ENCODE measurements at regions of chr6 and their contacts with region 1.

Region 1: DNA sequence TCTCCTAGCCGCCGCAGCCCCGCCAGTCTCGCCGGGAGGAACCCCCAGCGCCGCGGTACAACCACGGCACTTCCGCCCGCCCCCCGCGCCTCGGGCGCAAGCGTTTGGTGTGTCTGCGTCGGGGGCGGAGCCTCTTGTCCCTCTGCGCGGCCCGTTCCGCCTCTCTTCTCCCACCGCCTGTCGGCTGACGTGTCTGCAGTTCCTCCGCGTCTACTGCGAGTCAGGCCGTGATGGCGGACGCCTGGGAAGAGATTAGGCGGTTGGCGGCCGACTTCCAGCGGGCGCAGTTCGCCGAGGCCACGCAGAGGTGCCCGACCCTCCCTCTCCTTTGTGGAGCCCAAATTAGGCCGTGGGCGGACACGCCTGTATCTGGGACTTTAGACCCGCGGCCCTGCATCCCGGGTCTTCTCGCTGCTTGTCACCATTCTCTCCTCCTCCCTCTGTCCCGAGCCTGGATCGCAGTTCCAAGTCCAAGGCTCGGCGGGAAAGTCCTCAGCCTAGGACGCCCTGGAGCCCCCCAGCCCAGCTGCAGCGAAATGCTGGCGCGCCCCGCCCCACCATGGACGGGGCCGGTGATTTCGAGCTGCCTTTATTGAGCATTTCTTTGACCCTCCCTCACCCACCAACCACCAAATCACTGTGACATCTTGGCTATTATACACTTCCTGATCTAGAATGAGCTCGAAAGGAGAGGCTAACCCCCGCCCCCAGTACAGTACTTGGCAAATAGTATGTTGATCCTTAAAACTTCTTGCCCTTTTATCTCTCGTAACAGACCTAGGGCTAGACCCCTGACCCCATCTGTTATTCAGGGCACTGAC is at the start of gene UFL1:
- DNase-seq: peak; percentile 92
- H3K4me3 Mint-ChIP-seq: peak within 1 kb of the TSS; percentile 100
- H3K27ac Mint-ChIP-seq: peak within 1 kb of the TSS; percentile 99
- H3K4me1 Mint-ChIP-seq: peaks cover 22% of the 10 kb centered on the region
- H3K27me3 Mint-ChIP-seq: no peaks in the 10 kb centered on the region
- total RNA-seq, gene UFL1: 22.5 to 23.5 TPM

Region 2: GRCh38 chr6:96345501-96345900 is 176.4 kb before region 1 on chr6:
- CTCF ChIA-PET with region 1: no interaction called
- POLR2A ChIA-PET with region 1: no interaction called
- DNase-seq: no peak
- H3K4me3 Mint-ChIP-seq: no peak overlapping the region
- H3K27ac Mint-ChIP-seq: no peak overlapping the region
- H3K4me1 Mint-ChIP-seq: no peaks in the 10 kb centered on the region
- H3K27me3 Mint-ChIP-seq: no peaks in the 10 kb centered on the region

Region 3: GRCh38 chr6:96468681-96469224 is 53.1 kb before region 1 on chr6:
- CTCF ChIA-PET with region 1: interaction called, 12 read pairs
- POLR2A ChIA-PET with region 1: interaction called, 19 read pairs
- DNase-seq: no peak
- H3K4me3 Mint-ChIP-seq: no peak overlapping the region
- H3K27ac Mint-ChIP-seq: no peak overlapping the region
- H3K4me1 Mint-ChIP-seq: peaks cover 37% of the 10 kb centered on the region
- H3K27me3 Mint-ChIP-seq: peaks cover 13% of the 10 kb centered on the region

Region 4: GRCh38 chr6:96499781-96500180 is 22.1 kb before region 1 on chr6:
- CTCF ChIA-PET with region 1: interaction called, 18 read pairs
- POLR2A ChIA-PET with region 1: interaction called, 18 read pairs
- DNase-seq: peak; percentile 81
- H3K4me3 Mint-ChIP-seq: peak overlapping the region; percentile 9
- H3K27ac Mint-ChIP-seq: peak overlapping the region; percentile 80
- H3K4me1 Mint-ChIP-seq: peaks cover 36% of the 10 kb centered on the region
- H3K27me3 Mint-ChIP-seq: peaks cover 5% of the 10 kb centered on the region

Region 5: GRCh38 chr6:96837081-96837971 is 315.5 kb after region 1 on chr6 and contains the start of gene GPR63:
- CTCF ChIA-PET with region 1: no interaction called
- POLR2A ChIA-PET with region 1: interaction called, 10 read pairs
- DNase-seq: peak; percentile 89
- H3K4me3 Mint-ChIP-seq: peak within 1 kb of the TSS; percentile 94
- H3K27ac Mint-ChIP-seq: peak within 1 kb of the TSS; percentile 79
- H3K4me1 Mint-ChIP-seq: peaks cover 32% of the 10 kb centered on the region
- H3K27me3 Mint-ChIP-seq: peaks cover 19% of the 10 kb centered on the region
- total RNA-seq, gene GPR63: 3.5 to 3.7 TPM

Measured in activated CD4-positive, alpha-beta memory T cell treated with anti-CD3 and anti-CD28 coated beads, Interleukin-2, amount 10 ng/mL, durations not matched to agents 7 days and 5 days (primary cell).